Heart right ventricle (tissue), 16 donors: ENCODE measurements at regions of chr4 and their contacts with region 1.

Region 1: DNA sequence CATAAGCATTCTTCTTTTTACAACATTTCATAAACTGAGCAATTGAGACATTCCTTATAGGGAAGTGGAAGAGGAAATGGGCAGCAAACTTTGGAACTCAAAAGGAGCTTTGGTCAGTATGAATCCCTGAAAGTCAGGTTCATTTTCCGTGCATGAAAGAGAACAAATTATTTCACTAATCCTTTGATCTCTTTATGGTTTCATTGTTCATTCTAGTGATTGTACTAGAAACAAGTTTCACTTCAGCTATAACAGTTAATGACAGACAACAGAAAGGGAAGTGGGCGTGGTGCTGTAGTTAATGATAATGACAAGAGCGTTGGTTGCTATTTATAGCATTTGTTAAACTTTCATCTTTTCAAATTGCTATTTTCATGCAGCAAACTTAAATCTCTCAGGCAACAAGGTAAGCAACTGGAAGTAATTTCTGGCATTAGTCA is 98.3 kb downstream of the AREG start:
- DNase-seq: no peak
- ATAC-seq: no peak
- H3K4me3 ChIP-seq: no peak overlapping the region
- H3K27ac ChIP-seq: no peak overlapping the region
- H3K4me1 ChIP-seq: peaks cover 0 to 35% (median 5%) of the 10 kb centered on the region in 9 donors
- H3K27me3 ChIP-seq: no peaks in the 10 kb centered on the region
- CTCF ChIP-seq: no peak

Region 2: DNA sequence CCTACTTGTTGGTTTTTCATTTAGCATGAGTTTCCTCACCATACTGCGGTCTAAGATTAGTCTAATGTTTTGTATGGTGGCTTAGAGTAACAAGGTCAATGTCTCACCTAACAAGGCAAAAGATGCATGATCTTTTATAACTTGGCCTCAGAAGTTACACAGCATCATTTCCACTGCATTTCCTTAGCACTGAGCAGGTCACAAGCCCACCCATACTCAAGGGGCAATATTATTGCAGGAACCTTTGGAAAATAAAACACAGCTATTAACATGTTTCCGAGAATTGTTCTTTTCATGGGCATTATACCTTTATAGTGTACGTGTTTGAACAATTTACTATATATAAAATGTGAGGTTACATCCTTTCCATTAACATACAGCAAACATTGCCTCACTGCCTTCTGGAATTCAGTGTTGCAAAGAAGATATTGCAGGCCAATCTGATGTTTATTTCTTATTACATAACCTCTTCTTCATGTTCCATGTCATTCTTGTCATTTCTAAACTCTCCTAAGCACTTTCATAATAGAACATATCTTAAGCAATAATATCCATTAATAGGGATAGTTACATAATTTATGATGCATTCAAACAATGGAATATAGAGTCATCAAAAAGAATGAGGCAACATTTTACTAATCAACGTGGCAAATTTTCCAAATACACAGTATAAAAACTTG is 55.5 kb after region 1 on chr4:
- intact Hi-C with region 1: loop called in 1 of 10 experiments (anchors 10 kb)
- DNase-seq: no peak
- ATAC-seq: no peak
- H3K4me3 ChIP-seq: no peak overlapping the region
- H3K27ac ChIP-seq: no peak overlapping the region
- H3K4me1 ChIP-seq: no peaks in the 10 kb centered on the region
- H3K27me3 ChIP-seq: no peaks in the 10 kb centered on the region
- CTCF ChIP-seq: no peak

Region 3: GRCh38 chr4:74659576-74660411 is 116.5 kb after region 1 on chr4:
- intact Hi-C with region 1: loop called in 1 of 10 experiments (anchors 10 kb)
- DNase-seq: no peak
- ATAC-seq: peak in 6 of 8 donors; percentile 34 to 85 (median 56)
- H3K4me3 ChIP-seq: no peak overlapping the region
- H3K27ac ChIP-seq: no peak overlapping the region
- H3K4me1 ChIP-seq: peaks cover 0 to 12% (median 0%) of the 10 kb centered on the region in 9 donors
- H3K27me3 ChIP-seq: peaks cover 0 to 6% (median 0%) of the 10 kb centered on the region in 7 donors
- CTCF ChIP-seq: no peak